ENCODE measurements at regions of chr1 and their contacts with region 1.

Region 1: GRCh38 chr1:65419681-65420589 is 533 bp upstream of the LEPR start:
- DNase-seq: peak; percentile 98
- H3K4me3 Mint-ChIP-seq: no peak overlapping the region
- H3K27ac Mint-ChIP-seq: peak overlapping the region; percentile 89
- H3K4me1 Mint-ChIP-seq: peaks cover 19% of the 10 kb centered on the region
- H3K27me3 Mint-ChIP-seq: peaks cover 19% of the 10 kb centered on the region

Region 2: DNA sequence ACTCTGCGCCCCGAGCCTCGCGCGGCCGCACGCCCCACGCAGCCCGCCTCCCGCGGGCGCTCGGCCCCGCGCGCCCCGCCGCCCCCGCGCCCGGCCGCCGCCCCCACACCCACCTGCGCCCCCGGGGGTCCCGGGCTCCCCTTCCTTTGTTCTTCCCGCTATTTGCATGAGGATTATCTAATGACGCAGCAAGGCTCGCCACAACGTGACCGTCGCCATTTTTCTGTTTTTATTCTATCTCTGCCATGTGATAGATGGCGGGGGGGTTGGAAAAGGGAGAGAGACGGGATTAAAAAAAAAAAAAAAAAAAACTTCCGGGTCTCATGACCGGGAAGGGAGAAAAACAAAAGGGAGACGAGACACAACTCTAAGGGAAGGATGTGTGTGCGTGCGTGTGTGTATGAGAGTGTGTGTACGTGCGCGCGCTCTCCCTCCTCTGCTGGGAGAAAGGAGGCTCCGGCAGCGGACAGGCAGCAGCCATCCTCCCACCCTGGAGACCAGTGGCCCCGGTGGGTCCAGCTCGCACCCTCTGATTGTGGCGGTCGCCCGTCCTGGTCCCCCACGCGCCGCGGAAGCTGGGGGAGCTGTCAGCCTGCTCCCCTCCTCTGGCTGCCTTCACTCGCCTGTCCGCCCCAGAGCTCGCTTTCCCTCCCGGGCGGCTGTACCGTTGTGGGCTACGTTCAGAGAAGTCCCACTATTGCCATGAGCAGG is 352.3 kb before region 1 on chr1:
- intact Hi-C with region 1: loop called (anchors 2 kb)
- DNase-seq: peak; percentile 38
- H3K4me3 Mint-ChIP-seq: peak overlapping the region; percentile 89
- H3K27ac Mint-ChIP-seq: peak overlapping the region; percentile 97
- H3K4me1 Mint-ChIP-seq: peaks cover 31% of the 10 kb centered on the region
- H3K27me3 Mint-ChIP-seq: peaks cover 2% of the 10 kb centered on the region

Region 3: DNA sequence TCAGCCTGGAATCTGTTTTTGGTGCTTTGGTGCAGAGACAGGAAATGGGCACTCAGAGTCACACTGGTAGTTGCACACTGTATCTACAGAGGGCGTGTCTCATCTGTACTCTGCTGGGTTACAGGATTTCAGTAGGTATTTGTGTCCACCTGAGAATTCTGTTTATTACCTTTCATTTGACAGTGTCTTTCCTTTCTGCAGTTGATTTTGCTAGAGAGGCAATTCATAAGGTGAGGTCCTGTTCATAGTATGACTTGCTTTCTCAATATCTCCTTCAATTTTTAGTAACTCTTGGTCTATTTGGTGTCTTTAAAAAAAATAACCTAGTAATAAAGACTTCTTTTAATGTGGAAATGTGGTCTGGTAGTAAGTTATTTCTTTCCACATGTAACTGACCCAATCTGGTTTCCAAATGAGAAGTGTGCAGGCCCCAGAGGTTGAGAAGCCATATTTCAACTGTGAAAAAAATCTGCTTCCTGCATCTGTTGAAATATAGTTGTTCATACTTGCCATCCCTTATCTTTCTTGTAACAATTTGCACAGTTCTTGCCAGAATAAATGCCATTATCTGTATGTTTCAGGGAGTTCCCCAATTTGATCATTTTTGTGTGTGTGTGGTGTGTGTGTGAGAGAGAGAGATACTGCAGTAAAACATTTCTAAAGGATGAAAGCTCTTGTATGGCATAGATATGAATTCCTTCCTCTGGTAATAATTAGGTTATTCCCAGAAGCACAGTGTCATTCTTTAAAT is 189.0 kb before region 1 on chr1:
- intact Hi-C with region 1: loop called (anchors 1 kb)
- DNase-seq: no peak
- H3K4me3 Mint-ChIP-seq: peak overlapping the region; percentile 26
- H3K27ac Mint-ChIP-seq: peak overlapping the region; percentile 79
- H3K4me1 Mint-ChIP-seq: peaks cover 34% of the 10 kb centered on the region
- H3K27me3 Mint-ChIP-seq: no peaks in the 10 kb centered on the region

Region 4: GRCh38 chr1:65393347-65393746 is 26.6 kb before region 1 on chr1:
- intact Hi-C with region 1: loop called (anchors 1 kb)
- DNase-seq: peak; percentile 13
- H3K4me3 Mint-ChIP-seq: no peak overlapping the region
- H3K27ac Mint-ChIP-seq: peak overlapping the region; percentile 62
- H3K4me1 Mint-ChIP-seq: peaks cover 80% of the 10 kb centered on the region
- H3K27me3 Mint-ChIP-seq: no peaks in the 10 kb centered on the region

Region 5: DNA sequence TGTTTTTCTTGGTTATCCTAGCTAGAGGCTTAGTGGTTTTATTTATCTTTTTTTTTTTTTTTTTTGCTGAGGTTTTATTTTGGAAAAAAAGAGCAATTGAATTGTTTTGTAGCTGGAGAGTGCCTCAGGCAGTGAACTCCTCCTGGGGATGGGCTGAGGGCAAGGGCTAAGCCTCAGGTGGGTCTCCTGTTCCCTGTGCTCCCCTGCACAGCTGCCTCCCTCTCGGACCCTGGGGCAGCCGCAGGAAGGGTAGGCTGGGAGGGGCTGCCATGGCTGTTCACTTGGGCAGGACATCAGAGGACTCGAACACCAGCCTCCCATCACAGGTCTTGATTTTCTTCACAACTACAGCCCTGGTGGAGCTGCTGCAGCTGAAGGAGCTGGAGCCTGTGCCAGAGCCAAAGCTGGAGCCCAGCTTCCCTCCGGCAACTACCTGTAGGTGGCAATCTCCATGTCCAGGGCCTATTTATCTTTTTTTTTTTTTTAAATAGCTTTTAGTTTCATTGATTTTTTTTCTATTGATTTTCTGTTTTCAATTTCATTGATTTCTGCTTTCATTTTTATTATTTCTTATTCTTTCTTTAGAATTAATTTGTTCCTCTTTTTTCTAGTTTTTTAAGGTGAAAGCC is 29.4 kb after region 1 on chr1:
- intact Hi-C with region 1: no loop called
- DNase-seq: no peak
- H3K4me3 Mint-ChIP-seq: no peak overlapping the region
- H3K27ac Mint-ChIP-seq: no peak overlapping the region
- H3K4me1 Mint-ChIP-seq: no peaks in the 10 kb centered on the region
- H3K27me3 Mint-ChIP-seq: peaks cover 4% of the 10 kb centered on the region

Measured in activated T-helper 2 cell treated with anti-CD3 and anti-CD28 coated beads, Interferon-gamma antibody, Interleukin-2, Interleukin-4, amounts not matched to agents 10 μg/mL and 5 μg/mL and 100 μg/mL, durations not matched to agents 14 hours and 24 hours and 36 hours (primary cell).